ENCODE measurements at regions of chr1 and their contacts with region 1.

Region 1: DNA sequence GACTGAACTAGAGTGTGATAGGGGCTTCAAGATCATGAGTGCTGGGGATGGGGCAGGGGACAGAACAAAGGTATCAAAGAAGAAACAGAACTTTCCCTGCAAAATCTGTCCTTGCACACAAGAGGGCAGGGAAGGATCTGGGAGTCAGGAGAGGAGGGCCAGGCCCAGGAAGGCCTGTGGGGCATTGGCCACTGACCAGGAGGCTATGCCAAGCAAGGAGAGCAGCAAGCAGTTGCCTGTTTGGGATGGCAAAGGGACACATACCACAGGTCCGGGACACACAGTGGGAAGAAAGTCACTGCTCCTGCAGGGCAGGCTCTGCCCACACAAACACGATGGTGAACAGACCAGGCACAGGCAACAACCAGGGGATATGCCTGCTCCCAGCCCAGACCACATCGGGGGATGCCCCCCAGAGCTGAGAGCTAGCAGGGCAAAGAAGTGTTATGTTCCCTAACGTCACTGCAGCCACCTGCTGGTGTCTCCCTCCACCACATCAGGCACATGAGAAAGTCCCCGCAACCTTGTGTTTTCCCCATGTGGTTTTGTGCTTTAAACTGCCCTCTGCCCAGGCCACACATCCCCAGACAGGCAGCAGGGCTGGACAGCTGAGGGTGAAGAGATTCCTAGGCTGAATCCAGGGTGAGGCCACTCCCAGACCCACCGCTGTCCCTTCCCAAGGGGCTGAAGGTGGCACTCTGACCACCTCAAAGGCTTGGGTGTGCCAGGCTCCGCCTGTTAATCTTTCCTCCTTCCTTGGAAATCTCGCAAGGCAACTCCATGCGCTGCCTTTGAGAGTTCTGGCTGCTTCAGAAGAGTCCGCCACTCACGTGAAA is 53.6 kb downstream of the KIF21B start:
- DNase-seq: no peak

Region 2: GRCh38 chr1:201023517-201023902 is 53.6 kb after region 1 on chr1 and contains the start of gene KIF21B:
- in situ Hi-C with region 1: loop called (anchors 5 kb)
- DNase-seq: peak; percentile 68
- total RNA-seq, gene KIF21B: 2.9 and 4.7 TPM in 2 replicates

Region 3: GRCh38 chr1:201096977-201097856 is 127.3 kb after region 1 on chr1:
- in situ Hi-C with region 1: no loop called
- DNase-seq: no peak